ENCODE measurements at regions of chr6 and their contacts with region 1.

Region 1: DNA sequence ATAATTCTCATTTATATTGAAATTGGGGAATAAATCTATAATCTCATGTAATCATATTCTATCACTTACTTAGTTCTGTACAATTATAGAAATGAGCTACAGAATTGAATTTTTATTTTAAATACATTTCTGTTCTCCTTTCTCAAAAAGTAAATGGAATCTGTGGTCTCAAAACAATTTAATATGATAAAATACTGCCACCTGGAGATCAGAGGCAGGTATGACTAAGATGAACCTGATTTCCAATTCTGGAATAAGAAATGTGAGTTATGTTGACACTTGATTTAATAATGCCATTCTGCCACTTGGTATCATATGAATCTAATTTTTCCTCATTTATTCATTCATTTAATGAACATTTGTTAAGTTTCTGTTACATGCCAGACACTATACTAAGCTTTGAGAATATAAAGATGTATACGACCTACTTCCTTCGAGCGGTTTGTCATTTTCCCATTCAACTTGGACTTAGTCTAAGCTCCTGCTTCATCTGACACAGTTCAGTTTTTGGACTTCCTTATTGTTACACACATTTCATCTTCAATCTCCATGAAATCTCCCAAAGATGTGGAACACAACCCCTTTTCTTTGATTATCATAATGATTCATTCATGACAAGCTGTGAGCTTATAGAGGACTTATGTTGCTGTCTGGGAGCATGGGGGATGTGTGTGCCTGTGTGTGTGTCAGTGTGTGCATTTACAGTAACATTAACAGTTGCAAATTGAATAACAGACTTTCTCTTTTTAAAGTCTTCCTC is 7.5 kb upstream of the CCDC28A start:
- DNase-seq: peak; percentile 7
- H3K4me3 ChIP-seq: no peak overlapping the region
- H3K27me3 ChIP-seq: no peaks in the 10 kb centered on the region
- CTCF ChIP-seq: peak; percentile 53

Region 2: GRCh38 chr6:138588805-138589434 is 177.2 kb before region 1 on chr6:
- CTCF ChIA-PET with region 1: interaction called, 99 read pairs
- POLR2A ChIA-PET with region 1: no interaction called
- DNase-seq: no peak
- H3K4me3 ChIP-seq: no peak overlapping the region
- H3K27me3 ChIP-seq: no peaks in the 10 kb centered on the region
- CTCF ChIP-seq: peak; percentile 94

Region 3: DNA sequence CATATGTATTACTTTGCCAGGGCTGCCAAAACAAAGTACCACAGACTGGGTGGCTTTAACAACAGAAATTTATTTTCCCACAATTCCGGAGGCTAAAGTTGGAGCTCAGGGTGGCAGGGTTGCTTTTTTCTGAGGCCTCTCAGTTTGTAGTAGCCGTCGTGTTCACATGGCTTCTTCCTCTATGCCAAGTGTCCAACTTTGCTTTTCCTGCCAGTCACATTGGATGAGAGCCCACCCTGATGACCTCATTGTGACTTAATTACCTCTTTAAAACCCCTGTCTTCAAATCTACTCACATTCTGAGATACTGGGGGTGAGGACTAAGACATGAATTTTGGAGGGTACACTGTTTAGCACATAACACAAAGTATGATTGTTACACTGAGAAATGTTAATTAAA is 19.9 kb after region 1 on chr6:
- CTCF ChIA-PET with region 1: no interaction called
- POLR2A ChIA-PET with region 1: no interaction called
- DNase-seq: no peak
- H3K4me3 ChIP-seq: no peak overlapping the region
- H3K27me3 ChIP-seq: no peaks in the 10 kb centered on the region
- CTCF ChIP-seq: no peak